ENCODE measurements at regions of chr10 and their contacts with region 1.

Region 1: DNA sequence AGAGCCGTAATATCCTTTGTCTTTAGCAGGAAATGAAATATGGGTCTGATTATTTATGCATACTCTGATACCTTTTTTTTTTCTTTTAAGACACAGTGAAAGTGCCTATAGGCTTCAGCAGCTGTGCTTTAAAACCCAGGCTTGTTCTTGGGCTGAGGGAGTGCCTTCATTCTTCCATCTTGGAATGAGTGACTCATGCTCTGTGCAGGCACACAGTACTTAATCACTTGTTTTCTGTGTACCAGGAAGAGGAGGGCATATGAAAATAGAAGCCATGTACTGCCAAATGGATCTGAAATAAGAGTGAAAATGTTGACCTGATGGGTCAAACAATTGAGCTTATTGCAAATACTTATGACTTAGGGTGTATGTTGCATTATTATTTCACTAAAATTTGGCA is 12.0 kb downstream of the INPP5F start:
- DNase-seq: peak; percentile 33
- H3K4me3 Mint-ChIP-seq: no peak overlapping the region
- H3K27ac Mint-ChIP-seq: peak overlapping the region; percentile 33
- H3K4me1 Mint-ChIP-seq: peaks cover 40% of the 10 kb centered on the region
- H3K27me3 Mint-ChIP-seq: no peaks in the 10 kb centered on the region

Region 2: DNA sequence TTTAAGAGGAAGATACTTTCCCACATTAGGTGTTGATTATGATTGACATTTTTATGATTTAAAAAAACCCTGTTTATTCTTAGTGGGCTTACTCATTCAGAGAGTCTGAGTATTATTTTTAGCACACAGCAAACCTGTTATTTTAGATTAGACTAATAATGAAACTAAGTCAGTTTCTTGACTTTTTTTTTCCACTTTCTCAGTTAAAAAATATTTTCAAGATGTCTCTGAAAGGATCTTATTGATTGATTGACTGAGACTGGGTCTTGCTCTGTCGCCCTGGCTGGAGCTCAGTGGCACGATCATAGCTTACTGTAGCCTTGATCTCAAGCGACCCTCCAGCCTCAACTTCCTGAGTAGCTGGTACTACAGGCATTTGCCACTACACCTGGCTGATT is 32.4 kb before region 1 on chr10:
- CTCF ChIA-PET with region 1: interaction called, 3 read pairs
- POLR2A ChIA-PET with region 1: no interaction called
- intact Hi-C with region 1: loop called (anchors 2 kb)
- DNase-seq: peak; percentile 51
- H3K4me3 Mint-ChIP-seq: peak overlapping the region; percentile 55
- H3K27ac Mint-ChIP-seq: peak overlapping the region; percentile 92
- H3K4me1 Mint-ChIP-seq: peaks cover 79% of the 10 kb centered on the region
- H3K27me3 Mint-ChIP-seq: no peaks in the 10 kb centered on the region

Region 3: GRCh38 chr10:119947300-119947699 is 209.5 kb after region 1 on chr10:
- CTCF ChIA-PET with region 1: no interaction called
- POLR2A ChIA-PET with region 1: no interaction called
- intact Hi-C with region 1: no loop called
- DNase-seq: no peak
- H3K4me3 Mint-ChIP-seq: no peak overlapping the region
- H3K27ac Mint-ChIP-seq: no peak overlapping the region
- H3K4me1 Mint-ChIP-seq: no peaks in the 10 kb centered on the region
- H3K27me3 Mint-ChIP-seq: no peaks in the 10 kb centered on the region